ENCODE measurements at regions of chr19 and their contacts with region 1.

Region 1: DNA sequence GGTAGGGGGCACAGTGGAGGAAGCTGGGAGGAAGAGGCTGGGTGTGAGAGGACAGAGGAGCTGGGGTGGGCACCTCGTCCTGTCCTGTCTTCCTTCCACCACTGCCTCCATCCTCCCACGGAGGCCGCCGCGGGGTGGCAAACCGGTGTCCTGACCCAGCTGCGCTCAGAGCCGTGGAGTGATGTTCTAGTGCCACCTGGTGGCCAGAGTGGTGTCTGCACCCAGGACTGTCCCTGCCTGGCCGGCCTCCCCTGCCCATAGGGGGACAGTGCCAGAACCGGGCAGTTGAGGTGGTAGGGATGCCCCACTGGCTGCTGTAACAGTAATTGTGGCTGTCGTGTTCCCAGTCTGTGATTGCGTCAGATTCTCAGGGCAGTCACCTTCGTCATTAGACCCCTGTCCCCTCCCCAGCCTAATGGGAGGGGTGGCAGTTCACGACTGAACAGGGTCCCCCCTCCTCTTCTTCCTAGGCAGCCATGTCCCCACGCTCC is 11.1 kb upstream of the ARRDC2 start:
- DNase-seq: peak; percentile 48
- ATAC-seq: peak; percentile 67
- H3K4me3 ChIP-seq: peak overlapping the region; percentile 61 to 67
- H3K27ac ChIP-seq: peak overlapping the region; percentile 94
- H3K4me1 ChIP-seq: peaks cover 28 to 50% of the 10 kb centered on the region in 2 experiments
- H3K27me3 ChIP-seq: no peaks in the 10 kb centered on the region
- CTCF ChIP-seq: peak; percentile 93 to 98 (median 93)
- POLR2A ChIP-seq: no peak
- RAD21 ChIP-seq: peak; percentile 99

Region 2: DNA sequence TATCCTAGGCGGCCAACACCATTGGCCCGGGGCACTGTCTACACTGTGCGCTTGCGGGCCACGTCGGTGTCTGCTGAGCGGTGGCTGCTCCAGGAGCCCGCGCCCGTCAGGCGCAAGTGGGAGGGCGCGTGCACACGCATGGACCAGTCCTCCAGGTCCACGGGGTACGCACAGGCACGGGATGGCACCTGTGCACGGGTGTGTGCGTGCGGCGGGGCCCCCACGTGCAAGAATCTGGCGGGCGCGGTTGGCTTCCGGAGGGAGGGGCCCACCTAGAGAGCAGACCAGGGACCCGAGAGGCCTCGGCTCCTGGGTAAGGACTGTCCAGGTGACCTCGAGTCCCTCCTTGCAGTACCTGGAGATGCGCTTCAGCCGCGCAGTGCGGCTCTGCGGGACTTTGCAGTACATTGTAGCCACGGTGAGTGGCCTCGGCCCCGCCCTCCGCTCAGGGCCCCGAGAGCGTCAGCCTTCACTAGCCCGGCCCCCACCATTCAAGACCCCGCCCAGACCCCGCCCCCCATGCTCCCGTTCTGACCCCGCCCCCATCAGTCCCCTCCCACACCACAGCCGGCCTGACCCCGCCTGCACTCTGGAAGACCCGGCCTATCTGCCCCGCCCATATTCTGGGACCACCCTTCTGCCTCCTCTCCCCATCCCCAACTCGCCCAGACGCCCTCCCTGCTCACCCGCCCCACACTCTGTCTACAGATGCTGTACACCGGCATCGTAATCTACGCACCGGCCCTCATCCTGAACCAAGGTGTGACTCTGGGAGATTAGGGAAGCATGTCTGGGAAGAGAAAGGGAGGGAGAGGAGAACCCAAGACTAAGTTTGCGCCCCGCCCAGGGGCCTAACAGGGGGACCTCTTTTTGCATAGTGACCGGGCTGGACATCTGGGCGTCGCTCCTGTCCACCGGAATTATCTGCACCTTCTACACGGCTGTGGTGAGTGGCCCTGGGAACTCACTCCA is 122.8 kb before region 1 on chr19:
- CTCF ChIA-PET with region 1: interaction called, 12 read pairs
- POLR2A ChIA-PET with region 1: interaction called, 3 read pairs
- RAD21 ChIA-PET with region 1: interaction called, 3 read pairs
- intact Hi-C with region 1: loop called (anchors 2 kb)
- DNase-seq: peak; percentile 48
- ATAC-seq: peak; percentile 89
- H3K4me3 ChIP-seq: peak overlapping the region; percentile 22 to 57
- H3K27ac ChIP-seq: peak overlapping the region; percentile 75
- H3K4me1 ChIP-seq: peaks cover 10 to 18% of the 10 kb centered on the region in 2 experiments
- H3K27me3 ChIP-seq: no peaks in the 10 kb centered on the region
- CTCF ChIP-seq: no peak
- POLR2A ChIP-seq: no peak
- RAD21 ChIP-seq: no peak

Region 3: GRCh38 chr19:17938092-17938845 is 58.6 kb before region 1 on chr19:
- CTCF ChIA-PET with region 1: interaction called, 127 read pairs
- POLR2A ChIA-PET with region 1: interaction called, 4 read pairs
- RAD21 ChIA-PET with region 1: interaction called, 4 to 16 read pairs
- intact Hi-C with region 1: loop called (anchors 1 kb)
- DNase-seq: peak; percentile 59
- ATAC-seq: peak; percentile 87
- H3K4me3 ChIP-seq: no peak overlapping the region
- H3K27ac ChIP-seq: no peak overlapping the region
- H3K4me1 ChIP-seq: peaks cover 7 to 15% of the 10 kb centered on the region in 2 experiments
- H3K27me3 ChIP-seq: no peaks in the 10 kb centered on the region
- CTCF ChIP-seq: peak; percentile 88 to 94 (median 93)
- POLR2A ChIP-seq: no peak
- RAD21 ChIP-seq: peak; percentile 94

Region 4: DNA sequence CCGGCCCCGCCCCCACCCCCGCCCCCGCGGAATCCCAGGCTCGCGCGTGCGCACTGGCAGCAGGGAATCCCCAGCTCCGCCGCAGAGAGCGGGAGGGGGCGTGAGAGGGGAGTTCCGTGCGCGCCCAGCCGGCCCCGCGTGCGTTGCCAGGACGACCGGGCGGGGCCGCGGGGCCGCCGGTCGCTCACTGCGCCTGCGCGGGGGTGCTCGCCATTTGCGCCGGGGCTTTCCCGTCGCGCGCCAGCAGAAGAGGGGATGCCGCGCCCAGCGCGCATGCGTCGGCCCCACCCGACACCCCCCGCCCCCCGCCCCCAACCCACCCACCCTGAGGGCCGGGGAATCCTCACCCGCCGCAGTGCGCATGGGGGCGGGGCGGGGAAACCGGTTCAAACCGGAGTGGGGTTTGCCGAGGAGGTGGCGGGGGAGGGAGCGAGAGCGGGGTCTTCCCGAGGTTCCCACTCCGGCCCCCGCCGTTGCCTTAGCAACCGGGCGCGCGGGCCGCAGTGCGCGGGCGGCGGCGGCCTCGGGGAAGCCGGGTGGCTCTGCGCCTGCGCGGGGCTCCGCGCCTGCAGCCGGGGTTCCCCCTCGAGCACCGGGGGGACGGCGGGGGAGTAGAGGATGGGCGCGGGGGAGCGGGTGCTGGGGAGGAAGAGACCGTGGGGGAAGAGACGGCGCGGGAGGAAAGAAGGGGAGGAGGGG is 48.9 kb before region 1 on chr19:
- CTCF ChIA-PET with region 1: interaction called, 28 read pairs
- POLR2A ChIA-PET with region 1: interaction called, 9 read pairs
- RAD21 ChIA-PET with region 1: interaction called in 1 of 2 experiments, 4 read pairs
- intact Hi-C with region 1: loop called (anchors 2 kb)
- DNase-seq: peak; percentile 81
- ATAC-seq: peak; percentile 66
- H3K4me3 ChIP-seq: peak overlapping the region; percentile 44 to 62
- H3K27ac ChIP-seq: peak overlapping the region; percentile 47; the same call in 1 of the 2 replicates
- H3K4me1 ChIP-seq: peaks cover 34 to 67% of the 10 kb centered on the region in 2 experiments
- H3K27me3 ChIP-seq: no peaks in the 10 kb centered on the region
- CTCF ChIP-seq: no peak
- POLR2A ChIP-seq: no peak
- RAD21 ChIP-seq: no peak

Measured in HCT116 (cell line).